ENCODE measurements at regions of chr11 and their contacts with region 1.

Region 1: DNA sequence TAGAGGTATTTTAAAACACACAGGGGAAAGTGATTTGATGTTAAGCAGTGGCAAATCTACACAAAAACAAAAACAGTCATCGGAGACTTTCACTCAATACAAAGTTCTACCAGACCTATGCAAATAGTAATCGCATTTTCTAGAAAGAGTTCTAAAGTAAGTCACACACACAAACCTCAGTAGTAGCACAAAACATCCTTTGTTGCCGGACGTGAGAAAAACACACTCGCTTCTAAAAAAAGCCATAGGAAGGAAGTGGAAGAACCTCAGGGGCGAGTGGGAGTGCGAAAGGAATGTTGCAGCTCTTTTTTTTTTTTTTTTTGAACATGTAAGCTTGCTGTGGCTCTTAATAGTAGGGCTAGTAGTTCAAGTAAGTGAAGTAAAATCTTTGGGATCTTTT is 88.9 kb downstream of the MAML2 start:
- DNase-seq: peak in 7 of 14 experiments; percentile 21 to 84 (median 49)
- ATAC-seq: peak; percentile 15
- H3K4me3 ChIP-seq: peak overlapping the region; percentile 23
- H3K4me3 Mint-ChIP-seq: peak overlapping the region; percentile 81
- H3K27ac ChIP-seq: peak overlapping the region; percentile 26 to 53
- H3K27ac Mint-ChIP-seq: peak overlapping the region; percentile 99
- H3K4me1 ChIP-seq: peaks cover 47% of the 10 kb centered on the region
- H3K4me1 Mint-ChIP-seq: peaks cover 92% of the 10 kb centered on the region
- H3K27me3 ChIP-seq: no peaks in the 10 kb centered on the region
- H3K27me3 Mint-ChIP-seq: no peaks in the 10 kb centered on the region
- CTCF ChIP-seq: no peak

Region 2: DNA sequence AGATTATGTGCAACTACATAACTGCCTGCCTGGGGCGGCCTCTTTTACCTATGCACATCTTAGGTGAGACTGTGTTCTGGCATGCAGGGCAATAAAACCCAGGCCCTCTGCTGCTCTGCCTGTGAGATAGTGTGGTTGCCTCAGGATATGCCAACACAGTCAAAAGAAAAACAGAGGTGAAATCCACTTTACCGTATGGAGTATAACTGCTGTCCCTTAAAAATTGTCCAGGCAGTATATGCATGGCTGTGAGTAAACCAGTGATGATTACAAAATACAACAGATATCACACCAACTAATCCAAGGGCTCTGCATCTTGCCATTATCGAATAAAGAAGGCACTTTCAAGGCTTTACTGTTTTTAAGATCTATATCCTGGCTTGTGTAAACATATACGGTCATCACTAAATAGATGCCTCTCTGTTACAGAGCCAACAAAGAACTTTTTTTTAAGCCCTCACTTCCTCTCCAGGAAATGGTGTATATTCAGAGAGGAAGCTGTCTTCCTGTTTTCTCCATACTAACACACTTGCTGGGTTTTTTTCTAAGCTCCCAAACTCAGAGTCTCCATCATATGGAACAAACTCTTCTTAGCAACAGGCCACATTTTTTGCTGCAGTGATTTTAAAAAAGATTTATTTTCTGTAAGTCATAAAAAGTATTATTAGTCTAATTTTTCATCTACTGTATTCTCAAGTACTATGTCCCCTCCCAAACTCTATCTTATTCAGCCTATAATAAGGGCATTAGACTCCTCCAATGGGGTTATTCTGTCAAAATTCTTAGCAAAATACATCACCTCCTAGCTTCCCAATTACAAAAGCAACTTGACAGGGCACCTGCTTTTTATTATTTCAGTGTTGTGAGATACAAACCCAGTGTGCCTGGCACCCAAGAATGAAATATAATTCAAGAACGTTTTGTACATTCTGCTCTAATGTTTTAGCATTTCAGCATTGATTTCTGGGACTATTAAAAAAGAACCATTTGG is 46.3 kb before region 1 on chr11:
- CTCF ChIA-PET with region 1: no interaction called
- POLR2A ChIA-PET with region 1: interaction called, 8 read pairs
- intact Hi-C with region 1: loop called in 1 of 2 experiments (anchors 5 kb)
- DNase-seq: peak in 10 of 14 experiments; percentile 12 to 84 (median 32)
- ATAC-seq: peak; percentile 68
- H3K4me3 ChIP-seq: peak overlapping the region; percentile 22
- H3K4me3 Mint-ChIP-seq: peak overlapping the region; percentile 72
- H3K27ac ChIP-seq: peak overlapping the region; percentile 62 to 78
- H3K27ac Mint-ChIP-seq: peak overlapping the region; percentile 94
- H3K4me1 ChIP-seq: peaks cover 57% of the 10 kb centered on the region
- H3K4me1 Mint-ChIP-seq: peaks cover 86% of the 10 kb centered on the region
- H3K27me3 ChIP-seq: no peaks in the 10 kb centered on the region
- H3K27me3 Mint-ChIP-seq: no peaks in the 10 kb centered on the region
- CTCF ChIP-seq: no peak

Region 3: GRCh38 chr11:96242971-96243647 is 11.0 kb before region 1 on chr11:
- CTCF ChIA-PET with region 1: interaction called, 6 read pairs
- POLR2A ChIA-PET with region 1: interaction called, 33 read pairs
- intact Hi-C with region 1: loop called in 1 of 2 experiments (anchors 1 kb)
- DNase-seq: peak; percentile 51 to 90 (median 68)
- ATAC-seq: peak; percentile 83
- H3K4me3 ChIP-seq: peak overlapping the region; percentile 57
- H3K4me3 Mint-ChIP-seq: peak overlapping the region; percentile 92
- H3K27ac ChIP-seq: peak overlapping the region; percentile 58 to 76
- H3K27ac Mint-ChIP-seq: peak overlapping the region; percentile 99
- H3K4me1 ChIP-seq: peaks cover 35% of the 10 kb centered on the region
- H3K4me1 Mint-ChIP-seq: peaks cover 69% of the 10 kb centered on the region
- H3K27me3 ChIP-seq: no peaks in the 10 kb centered on the region
- H3K27me3 Mint-ChIP-seq: no peaks in the 10 kb centered on the region
- CTCF ChIP-seq: no peak

Region 4: DNA sequence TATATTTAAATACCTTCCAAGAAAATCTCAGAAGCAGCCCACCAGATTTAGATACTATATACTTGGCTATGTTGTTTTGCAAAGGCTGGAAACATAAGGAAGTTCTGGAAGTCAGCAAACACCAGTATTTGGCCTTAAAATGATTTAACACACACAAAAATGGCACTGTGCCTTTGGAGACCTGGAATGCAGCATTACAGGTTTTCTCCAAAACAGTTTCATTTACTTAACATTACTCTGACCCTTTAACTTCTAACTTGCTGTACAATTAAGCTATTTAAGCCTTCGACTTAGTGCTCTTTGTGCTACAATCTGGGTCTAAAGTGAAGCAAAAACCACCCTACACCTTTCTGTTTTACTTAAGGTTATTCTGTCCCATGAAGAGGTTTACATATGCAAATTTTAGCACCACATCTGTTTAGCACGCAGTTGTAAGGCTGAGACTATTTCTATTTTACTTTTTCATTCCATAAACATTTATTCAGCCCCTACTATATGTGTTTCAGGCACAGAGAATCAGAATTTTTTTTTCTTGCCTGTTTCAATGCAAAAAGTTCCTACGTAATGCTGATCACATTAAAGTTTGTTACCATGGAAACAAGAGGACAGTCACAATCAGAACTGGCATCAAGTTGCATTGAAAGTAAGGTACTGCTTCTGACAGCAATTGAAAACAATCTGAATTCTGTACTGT is 18.6 kb after region 1 on chr11:
- CTCF ChIA-PET with region 1: no interaction called
- POLR2A ChIA-PET with region 1: interaction called, 11 read pairs
- intact Hi-C with region 1: loop called in 1 of 2 experiments (anchors 1 kb)
- DNase-seq: peak in 3 of 14 experiments; percentile 69 to 82 (median 75)
- ATAC-seq: peak; percentile 91
- H3K4me3 ChIP-seq: no peak overlapping the region
- H3K4me3 Mint-ChIP-seq: peak overlapping the region; percentile 2
- H3K27ac ChIP-seq: peak overlapping the region; percentile 14 to 27
- H3K27ac Mint-ChIP-seq: peak overlapping the region; percentile 83
- H3K4me1 ChIP-seq: peaks cover 6% of the 10 kb centered on the region
- H3K4me1 Mint-ChIP-seq: peaks cover 57% of the 10 kb centered on the region
- H3K27me3 ChIP-seq: no peaks in the 10 kb centered on the region
- H3K27me3 Mint-ChIP-seq: no peaks in the 10 kb centered on the region
- CTCF ChIP-seq: no peak

Region 5: GRCh38 chr11:96306933-96307775 is 53.1 kb after region 1 on chr11:
- CTCF ChIA-PET with region 1: no interaction called
- POLR2A ChIA-PET with region 1: interaction called, 7 read pairs
- intact Hi-C with region 1: loop called in 1 of 2 experiments (anchors 5 kb)
- DNase-seq: peak in 5 of 14 experiments; percentile 7 to 55 (median 46)
- ATAC-seq: peak; percentile 76
- H3K4me3 ChIP-seq: no peak overlapping the region
- H3K4me3 Mint-ChIP-seq: peak overlapping the region; percentile 69
- H3K27ac ChIP-seq: no peak overlapping the region
- H3K27ac Mint-ChIP-seq: peak overlapping the region; percentile 85
- H3K4me1 ChIP-seq: peaks cover 11% of the 10 kb centered on the region
- H3K4me1 Mint-ChIP-seq: peaks cover 92% of the 10 kb centered on the region
- H3K27me3 ChIP-seq: no peaks in the 10 kb centered on the region
- H3K27me3 Mint-ChIP-seq: no peaks in the 10 kb centered on the region
- CTCF ChIP-seq: no peak